Heart left ventricle (tissue), 16 donors: ENCODE measurements at regions of chr1 and their contacts with region 1.

Region 1: GRCh38 chr1:107232426-107232825 is 91.6 kb downstream of the NTNG1 start:
- DNase-seq: no peak
- ATAC-seq: no peak
- H3K4me3 ChIP-seq: no peak overlapping the region
- H3K27ac ChIP-seq: no peak overlapping the region
- H3K4me1 ChIP-seq: no peaks in the 10 kb centered on the region
- H3K27me3 ChIP-seq: no peaks in the 10 kb centered on the region
- CTCF ChIP-seq: no peak
- POLR2A ChIP-seq: no peak

Region 2: DNA sequence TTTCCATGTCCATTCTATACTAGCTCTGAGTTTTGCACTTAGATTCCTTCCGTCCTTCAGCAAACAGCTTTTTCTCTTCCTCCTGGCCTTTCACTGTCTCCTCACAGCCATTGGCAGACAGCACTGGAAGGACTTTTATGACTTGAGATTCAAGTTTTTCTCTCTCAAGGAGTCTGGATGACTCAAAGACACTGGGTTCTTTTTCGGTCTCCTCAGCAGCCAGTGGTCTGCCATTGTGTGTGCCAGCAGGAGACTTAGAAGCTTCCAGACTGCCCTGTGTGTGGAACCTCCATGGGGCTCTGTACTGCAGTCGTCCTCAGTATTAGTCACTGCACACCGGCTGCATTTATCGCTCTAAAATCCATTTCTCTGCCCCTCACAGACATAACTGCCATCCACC is 61.1 kb before region 1 on chr1:
- intact Hi-C with region 1: no loop called
- DNase-seq: no peak
- ATAC-seq: no peak
- H3K4me3 ChIP-seq: no peak overlapping the region
- H3K27ac ChIP-seq: no peak overlapping the region
- H3K4me1 ChIP-seq: no peaks in the 10 kb centered on the region
- H3K27me3 ChIP-seq: no peaks in the 10 kb centered on the region
- CTCF ChIP-seq: no peak
- POLR2A ChIP-seq: no peak

Region 3: GRCh38 chr1:107252271-107252670 is 19.8 kb after region 1 on chr1:
- intact Hi-C with region 1: loop called in 1 of 10 experiments (anchors 2 kb)
- DNase-seq: no peak
- ATAC-seq: no peak
- H3K4me3 ChIP-seq: no peak overlapping the region
- H3K27ac ChIP-seq: no peak overlapping the region
- H3K4me1 ChIP-seq: no peaks in the 10 kb centered on the region
- H3K27me3 ChIP-seq: no peaks in the 10 kb centered on the region
- CTCF ChIP-seq: no peak
- POLR2A ChIP-seq: no peak

Region 4: GRCh38 chr1:107338941-107339340 is 106.5 kb after region 1 on chr1:
- intact Hi-C with region 1: no loop called
- DNase-seq: no peak
- ATAC-seq: no peak
- H3K4me3 ChIP-seq: no peak overlapping the region
- H3K27ac ChIP-seq: no peak overlapping the region
- H3K4me1 ChIP-seq: no peaks in the 10 kb centered on the region
- H3K27me3 ChIP-seq: no peaks in the 10 kb centered on the region
- CTCF ChIP-seq: no peak
- POLR2A ChIP-seq: no peak